ENCODE measurements at regions of chr17 and their contacts with region 1.

Region 1: DNA sequence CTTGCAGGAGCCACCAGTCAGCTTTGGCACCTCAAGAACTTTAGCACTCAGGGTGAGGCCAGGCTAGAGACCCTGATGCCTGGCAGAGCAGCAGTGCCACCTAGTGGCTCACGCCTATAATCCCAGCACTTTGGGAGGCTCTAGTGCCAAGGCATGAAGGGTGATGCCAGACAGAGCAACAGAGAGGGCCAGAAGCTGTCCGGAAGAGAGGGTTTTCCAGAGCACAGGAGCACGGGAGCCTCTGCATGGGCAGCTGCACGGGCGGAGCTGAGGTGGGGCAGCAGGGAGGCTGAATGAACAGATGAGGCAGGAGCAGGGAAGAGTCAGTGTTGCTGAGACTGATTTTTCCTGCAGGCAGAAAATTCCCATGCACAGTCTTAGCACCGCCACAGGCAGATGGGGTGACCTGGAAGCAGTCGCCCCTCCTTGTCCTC is 38.9 kb downstream of the MYH3 start:
- DNase-seq: peak; percentile 22 to 73 (median 40)
- ATAC-seq: peak; percentile 83
- H3K4me3 ChIP-seq: no peak overlapping the region
- H3K4me3 Mint-ChIP-seq: no peak overlapping the region
- H3K27ac ChIP-seq: no peak overlapping the region
- H3K27ac Mint-ChIP-seq: no peak overlapping the region
- H3K4me1 ChIP-seq: no peaks in the 10 kb centered on the region
- H3K4me1 Mint-ChIP-seq: no peaks in the 10 kb centered on the region
- H3K27me3 ChIP-seq: peaks cover 0 to 2% of the 10 kb centered on the region in 2 experiments
- H3K27me3 Mint-ChIP-seq: peaks cover 3% of the 10 kb centered on the region
- CTCF ChIP-seq: peak; percentile 82

Region 2: GRCh38 chr17:9729034-9729650 is 889.1 kb before region 1 on chr17:
- CTCF ChIA-PET with region 1: no interaction called
- POLR2A ChIA-PET with region 1: no interaction called
- intact Hi-C with region 1: loop called (anchors 5 to 10 kb)
- DNase-seq: peak in 3 of 14 experiments; percentile 35 to 52 (median 45)
- ATAC-seq: no peak
- H3K4me3 ChIP-seq: no peak overlapping the region
- H3K4me3 Mint-ChIP-seq: no peak overlapping the region
- H3K27ac ChIP-seq: no peak overlapping the region
- H3K27ac Mint-ChIP-seq: no peak overlapping the region
- H3K4me1 ChIP-seq: no peaks in the 10 kb centered on the region
- H3K4me1 Mint-ChIP-seq: no peaks in the 10 kb centered on the region
- H3K27me3 ChIP-seq: peaks cover 0 to 7% of the 10 kb centered on the region in 2 experiments
- H3K27me3 Mint-ChIP-seq: peaks cover 9% of the 10 kb centered on the region
- CTCF ChIP-seq: peak; percentile 90

Region 3: DNA sequence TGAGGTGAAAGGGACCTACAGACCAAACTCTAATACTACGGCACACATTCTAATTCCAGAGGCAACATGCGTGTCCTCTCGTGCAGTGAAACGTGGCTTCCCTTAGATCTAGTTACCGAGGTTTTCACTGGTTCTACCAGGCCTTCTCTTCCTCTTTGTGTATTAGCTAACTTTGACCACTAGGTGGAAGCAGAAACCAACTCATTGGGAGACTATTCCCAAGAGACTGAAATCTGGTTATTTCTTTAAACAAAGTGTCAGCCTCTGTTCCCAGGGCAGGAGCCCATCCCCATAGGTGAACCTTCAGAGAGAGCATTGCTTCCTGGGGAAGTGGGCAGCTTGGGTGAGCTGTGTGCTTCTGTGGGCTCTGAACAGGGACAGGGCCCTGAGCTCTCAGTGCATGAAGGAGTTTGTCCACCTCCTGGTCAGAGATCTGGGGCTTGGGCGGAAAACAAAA is 693.5 kb before region 1 on chr17:
- CTCF ChIA-PET with region 1: no interaction called
- POLR2A ChIA-PET with region 1: no interaction called
- intact Hi-C with region 1: loop called (anchors 2 to 5 kb)
- DNase-seq: peak in 3 of 14 experiments; percentile 55 to 67 (median 61)
- ATAC-seq: no peak
- H3K4me3 ChIP-seq: no peak overlapping the region
- H3K4me3 Mint-ChIP-seq: no peak overlapping the region
- H3K27ac ChIP-seq: no peak overlapping the region
- H3K27ac Mint-ChIP-seq: no peak overlapping the region
- H3K4me1 ChIP-seq: no peaks in the 10 kb centered on the region
- H3K4me1 Mint-ChIP-seq: no peaks in the 10 kb centered on the region
- H3K27me3 ChIP-seq: no peaks in the 10 kb centered on the region
- H3K27me3 Mint-ChIP-seq: no peaks in the 10 kb centered on the region
- CTCF ChIP-seq: peak; percentile 61

Region 4: DNA sequence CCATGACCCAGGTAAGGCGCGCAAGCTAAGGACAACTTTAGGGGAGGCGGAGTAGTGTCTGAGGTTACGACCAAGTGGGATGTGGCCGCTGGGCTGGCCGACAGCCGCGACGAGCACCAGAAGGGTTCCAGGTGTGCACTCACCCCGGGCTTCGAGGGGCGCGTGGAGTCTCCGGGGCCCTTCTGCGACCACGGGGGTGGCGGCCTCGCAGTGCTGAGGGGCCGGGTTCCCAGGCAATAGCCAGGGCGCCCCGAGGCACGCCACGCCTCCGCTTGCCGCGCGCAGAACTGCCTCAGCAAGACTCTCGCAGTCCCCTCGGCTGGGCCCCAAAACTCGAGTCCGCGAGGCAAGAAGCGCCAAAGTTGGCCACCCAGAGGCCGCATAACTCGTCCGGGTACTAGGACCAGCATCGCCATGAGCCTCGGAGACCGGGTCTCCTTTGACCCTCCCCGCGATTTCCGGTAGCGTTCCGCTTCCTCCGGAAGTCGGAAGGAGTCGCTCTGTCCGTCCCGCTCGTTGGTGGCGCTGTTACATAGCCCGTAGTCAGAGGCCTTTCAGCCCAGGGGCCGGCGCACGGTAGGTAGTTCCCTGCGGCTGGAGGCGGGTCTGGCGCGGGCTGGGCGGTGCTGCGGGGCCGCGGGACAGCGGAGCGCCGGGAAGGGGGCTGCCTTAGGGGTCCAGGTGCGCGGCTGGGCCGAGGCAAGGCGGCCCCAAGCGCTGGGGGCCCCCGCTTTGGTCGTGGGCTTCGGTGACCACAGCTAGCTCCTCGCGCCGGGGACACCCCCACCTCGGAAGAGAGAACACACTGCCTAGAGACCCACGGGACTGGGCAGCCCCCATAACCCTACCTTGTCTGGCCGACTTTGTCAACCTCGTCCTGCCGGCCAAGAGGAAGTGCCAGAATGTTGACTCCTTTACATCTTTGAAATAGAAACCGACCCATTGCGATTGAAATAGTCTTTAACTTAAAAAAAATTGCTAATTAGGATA is 79.2 kb after region 1 on chr17 and contains the starts of genes ADPRM and SCO1:
- CTCF ChIA-PET with region 1: no interaction called
- POLR2A ChIA-PET with region 1: no interaction called
- intact Hi-C with region 1: no loop called
- DNase-seq: peak; percentile 76 to 95 (median 86)
- ATAC-seq: peak; percentile 84
- H3K4me3 ChIP-seq: peak within 1 kb of the TSS; percentile 81
- H3K4me3 Mint-ChIP-seq: peak within 1 kb of the TSS; percentile 94
- H3K27ac ChIP-seq: peak within 1 kb of the TSS; percentile 84 to 95
- H3K27ac Mint-ChIP-seq: peak within 1 kb of the TSS; percentile 95
- H3K4me1 ChIP-seq: peaks cover 39% of the 10 kb centered on the region
- H3K4me1 Mint-ChIP-seq: peaks cover 70% of the 10 kb centered on the region
- H3K27me3 ChIP-seq: no peaks in the 10 kb centered on the region
- H3K27me3 Mint-ChIP-seq: no peaks in the 10 kb centered on the region
- CTCF ChIP-seq: no peak
- total RNA-seq, gene ADPRM: 34.2 to 35.0 TPM
- total RNA-seq, gene SCO1: 15.3 to 18.2 TPM